ENCODE measurements at regions of chr15 and their contacts with region 1.

Region 1: DNA sequence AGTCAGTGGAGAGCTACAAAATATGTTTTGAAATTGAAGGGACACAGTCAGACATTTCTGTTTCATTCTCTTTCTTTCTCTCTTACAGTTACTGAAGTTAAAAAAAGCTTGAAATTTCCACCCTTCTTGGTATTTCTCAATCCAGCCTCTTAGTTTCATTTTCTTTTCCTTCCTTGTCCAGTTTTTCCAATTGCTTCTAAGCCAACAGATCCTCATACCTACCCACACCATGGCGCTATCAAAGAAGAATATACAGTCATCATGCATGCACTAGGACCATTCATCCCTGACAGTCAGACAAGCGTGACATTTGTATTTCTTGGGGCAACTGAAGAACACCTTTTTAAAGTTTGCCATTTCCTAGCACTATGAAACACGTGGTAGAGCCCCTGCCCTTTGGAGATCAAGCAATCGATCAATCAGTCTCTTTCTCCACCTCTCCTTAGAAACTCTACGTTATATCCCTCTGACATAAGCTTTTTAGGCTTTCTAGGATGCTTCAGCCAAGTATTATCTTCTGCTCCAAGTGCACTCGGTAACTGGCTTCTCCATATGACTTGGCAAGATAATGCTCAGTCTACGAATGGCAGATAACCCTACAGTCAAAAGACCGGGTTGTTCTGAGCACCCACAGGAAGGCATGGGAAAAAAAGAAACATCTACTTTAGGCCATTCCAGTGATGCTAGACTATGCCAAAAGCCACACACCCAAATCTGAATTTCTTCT is 65.4 kb downstream of the FBN1 start:
- DNase-seq: no peak
- H3K4me3 ChIP-seq: no peak overlapping the region
- H3K27me3 ChIP-seq: no peaks in the 10 kb centered on the region
- CTCF ChIP-seq: no peak

Region 2: DNA sequence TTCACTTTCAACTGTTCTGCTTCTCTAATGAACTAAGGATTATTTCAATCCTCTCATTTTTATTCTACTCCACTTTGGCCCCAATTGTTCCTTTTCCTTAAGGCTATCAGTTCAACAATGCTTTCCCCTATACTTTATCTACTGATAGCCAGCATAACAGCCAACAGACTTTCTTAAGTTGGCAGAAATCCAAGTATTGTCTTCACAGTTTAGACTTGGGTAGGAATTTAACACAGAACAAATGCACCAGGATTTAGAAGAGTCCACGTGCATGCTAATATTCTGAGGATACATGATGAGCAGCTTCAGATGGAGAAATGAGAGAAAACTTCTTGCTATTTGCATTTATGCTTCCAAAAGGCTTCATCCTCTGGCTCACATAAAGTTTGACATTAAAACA is 10.6 kb after region 1 on chr15:
- CTCF ChIA-PET with region 1: interaction called, 10 read pairs
- POLR2A ChIA-PET with region 1: interaction called, 3 read pairs
- DNase-seq: no peak
- H3K4me3 ChIP-seq: no peak overlapping the region
- H3K27me3 ChIP-seq: no peaks in the 10 kb centered on the region
- CTCF ChIP-seq: no peak

Region 3: GRCh38 chr15:48888836-48889235 is 308.7 kb after region 1 on chr15:
- CTCF ChIA-PET with region 1: no interaction called
- POLR2A ChIA-PET with region 1: no interaction called
- DNase-seq: no peak
- H3K4me3 ChIP-seq: no peak overlapping the region
- H3K27me3 ChIP-seq: no peaks in the 10 kb centered on the region
- CTCF ChIP-seq: no peak

Measured in BJ (cell line).